ENCODE measurements at regions of chr3 and their contacts with region 1.

Region 1: DNA sequence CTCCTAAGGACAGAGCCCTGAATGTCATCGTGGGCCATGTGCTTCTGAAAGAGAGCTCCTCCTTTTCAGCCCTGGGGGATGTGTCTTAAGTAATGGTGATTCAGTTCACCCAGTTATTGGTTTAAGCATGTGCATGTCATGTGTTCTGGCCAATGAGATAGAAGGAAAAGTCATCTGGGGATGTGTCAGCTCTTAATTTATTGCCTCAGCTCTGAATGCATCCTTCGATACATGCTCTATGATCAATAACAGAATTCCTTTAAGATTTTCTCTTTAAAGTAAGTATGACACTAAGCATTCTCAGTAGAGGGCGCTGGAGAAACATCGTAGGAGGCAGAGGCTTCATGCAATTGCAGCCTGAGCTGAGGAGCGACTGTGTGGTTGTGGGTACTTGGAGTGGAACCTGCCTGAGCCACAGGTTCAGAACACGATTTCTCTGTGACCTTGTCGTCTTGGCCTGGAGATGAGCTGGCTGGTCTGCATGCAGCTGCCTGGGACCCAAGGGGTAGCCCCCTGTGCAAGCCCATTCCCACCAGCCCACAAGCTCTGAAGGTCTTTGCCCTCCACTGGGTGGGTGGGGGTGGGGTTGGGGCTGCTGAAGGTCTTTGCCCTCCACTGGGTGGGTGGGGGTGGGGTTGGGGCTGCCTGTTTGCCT is 69.5 kb downstream of the C3orf38 start:
- DNase-seq: peak; percentile 56
- ATAC-seq: peak; percentile 82
- H3K4me3 Mint-ChIP-seq: no peak overlapping the region
- H3K27ac Mint-ChIP-seq: no peak overlapping the region
- H3K4me1 Mint-ChIP-seq: no peaks in the 10 kb centered on the region
- H3K27me3 Mint-ChIP-seq: no peaks in the 10 kb centered on the region

Region 2: GRCh38 chr3:87975716-87976115 is 243.5 kb before region 1 on chr3:
- CTCF ChIA-PET with region 1: no interaction called
- POLR2A ChIA-PET with region 1: no interaction called
- intact Hi-C with region 1: no loop called
- DNase-seq: no peak
- ATAC-seq: no peak
- H3K4me3 Mint-ChIP-seq: no peak overlapping the region
- H3K27ac Mint-ChIP-seq: no peak overlapping the region
- H3K4me1 Mint-ChIP-seq: no peaks in the 10 kb centered on the region
- H3K27me3 Mint-ChIP-seq: peaks cover 6% of the 10 kb centered on the region

Region 3: GRCh38 chr3:88452228-88452627 is 233.0 kb after region 1 on chr3:
- CTCF ChIA-PET with region 1: no interaction called
- POLR2A ChIA-PET with region 1: no interaction called
- intact Hi-C with region 1: loop called in 1 of 2 experiments (anchors 10 kb)
- DNase-seq: no peak
- ATAC-seq: no peak
- H3K4me3 Mint-ChIP-seq: no peak overlapping the region
- H3K27ac Mint-ChIP-seq: no peak overlapping the region
- H3K4me1 Mint-ChIP-seq: no peaks in the 10 kb centered on the region
- H3K27me3 Mint-ChIP-seq: no peaks in the 10 kb centered on the region

Region 4: DNA sequence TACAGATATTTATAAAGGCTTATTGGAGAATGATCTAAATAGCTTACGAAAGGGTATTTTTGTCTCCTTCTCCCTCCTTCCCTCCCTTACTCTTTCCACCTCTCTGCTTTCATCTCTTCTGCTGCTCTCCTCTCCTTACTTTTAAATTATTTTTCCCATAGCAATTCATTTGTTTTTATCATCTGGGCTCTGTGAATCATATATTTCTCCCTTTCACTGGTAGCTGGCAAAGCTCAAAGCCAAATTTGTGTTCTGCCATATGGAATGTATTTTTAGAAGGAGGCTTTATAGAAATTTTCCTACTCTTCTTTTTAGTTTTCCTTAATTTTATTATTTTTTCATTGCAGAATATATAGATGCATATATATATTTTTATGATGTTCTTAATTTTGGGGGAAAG is 316.3 kb after region 1 on chr3:
- CTCF ChIA-PET with region 1: no interaction called
- POLR2A ChIA-PET with region 1: no interaction called
- intact Hi-C with region 1: no loop called
- DNase-seq: no peak
- ATAC-seq: no peak
- H3K4me3 Mint-ChIP-seq: no peak overlapping the region
- H3K27ac Mint-ChIP-seq: no peak overlapping the region
- H3K4me1 Mint-ChIP-seq: no peaks in the 10 kb centered on the region
- H3K27me3 Mint-ChIP-seq: no peaks in the 10 kb centered on the region

Region 5: GRCh38 chr3:89098964-89099585 is 879.8 kb after region 1 on chr3:
- CTCF ChIA-PET with region 1: no interaction called
- POLR2A ChIA-PET with region 1: no interaction called
- intact Hi-C with region 1: loop called in 1 of 2 experiments (anchors 1 kb)
- DNase-seq: peak; percentile 52
- ATAC-seq: peak; percentile 81
- H3K4me3 Mint-ChIP-seq: no peak overlapping the region
- H3K27ac Mint-ChIP-seq: no peak overlapping the region
- H3K4me1 Mint-ChIP-seq: no peaks in the 10 kb centered on the region
- H3K27me3 Mint-ChIP-seq: peaks cover 2% of the 10 kb centered on the region

Region 6: GRCh38 chr3:89113903-89114840 is 894.9 kb after region 1 on chr3:
- CTCF ChIA-PET with region 1: no interaction called
- POLR2A ChIA-PET with region 1: no interaction called
- intact Hi-C with region 1: loop called in 1 of 2 experiments (anchors 1 kb)
- DNase-seq: peak; percentile 72
- ATAC-seq: peak; percentile 87
- H3K4me3 Mint-ChIP-seq: peak overlapping the region; percentile 53
- H3K27ac Mint-ChIP-seq: no peak overlapping the region
- H3K4me1 Mint-ChIP-seq: peaks cover 7% of the 10 kb centered on the region
- H3K27me3 Mint-ChIP-seq: peaks cover 21% of the 10 kb centered on the region

Region 7: GRCh38 chr3:90180096-90180495 is 1960.8 kb after region 1 on chr3:
- CTCF ChIA-PET with region 1: no interaction called
- POLR2A ChIA-PET with region 1: no interaction called
- intact Hi-C with region 1: loop called in 1 of 2 experiments (anchors 5 kb)
- DNase-seq: no peak
- ATAC-seq: no peak
- H3K4me3 Mint-ChIP-seq: no peak overlapping the region
- H3K27ac Mint-ChIP-seq: no peak overlapping the region
- H3K4me1 Mint-ChIP-seq: no peaks in the 10 kb centered on the region
- H3K27me3 Mint-ChIP-seq: no peaks in the 10 kb centered on the region